ENCODE measurements at regions of chr6 and their contacts with region 1.

Region 1: DNA sequence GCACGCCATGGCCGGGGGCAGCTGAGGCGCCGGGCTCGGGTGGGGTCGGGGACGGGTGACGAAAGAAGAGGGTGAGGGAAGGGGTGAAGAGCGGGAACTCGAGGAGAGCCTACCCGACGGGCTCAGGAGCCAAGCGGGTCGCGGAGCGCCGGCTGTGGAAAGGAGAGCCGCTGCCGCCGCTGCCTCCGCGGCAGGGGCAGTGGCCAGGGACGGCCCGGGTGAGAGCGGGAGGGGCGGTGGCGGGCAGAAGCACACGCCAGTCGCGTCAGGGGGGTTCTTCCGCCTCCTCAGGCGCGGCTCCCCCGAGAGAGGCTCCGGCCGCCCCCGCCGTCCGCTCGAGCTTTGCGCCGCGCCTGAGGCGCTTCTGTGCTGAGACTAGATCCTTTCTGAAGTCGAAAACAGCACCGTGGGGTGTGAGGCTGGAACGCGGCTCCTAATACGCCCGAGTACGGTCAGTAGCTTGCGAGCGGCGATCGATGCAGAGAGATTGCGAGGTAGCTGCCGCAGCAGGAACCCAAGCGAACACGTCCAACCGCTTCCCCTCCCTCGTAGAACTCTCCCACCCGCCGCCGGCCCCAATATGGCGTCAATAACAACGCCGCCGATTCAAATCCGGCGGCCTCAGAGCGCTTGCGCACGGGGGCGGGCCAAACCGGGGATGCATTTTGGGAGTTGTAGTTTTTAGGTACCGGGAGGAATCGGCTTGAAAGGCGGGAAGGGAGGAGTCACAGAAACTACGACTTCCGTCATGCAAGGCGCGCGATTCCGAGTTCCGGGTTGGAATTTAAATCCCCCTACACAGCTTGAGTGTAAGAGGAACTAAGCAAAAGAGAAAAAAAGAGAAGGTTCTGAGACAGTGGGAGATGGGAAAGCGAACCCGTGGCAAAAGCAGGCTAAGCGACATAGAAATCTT is at the start of gene AKIRIN2:
- DNase-seq: peak; percentile 95 to 96
- H3K4me3 ChIP-seq: peak within 1 kb of the TSS; percentile 95 to 99 (median 95)
- H3K27ac ChIP-seq: peak within 1 kb of the TSS; percentile 92
- H3K4me1 ChIP-seq: peaks cover 0 to 8% (median 0%) of the 10 kb centered on the region in 4 experiments; a peak in 2 of 7 replicates
- H3K27me3 ChIP-seq: no peaks in the 10 kb centered on the region
- CTCF ChIP-seq: no peak
- EP300 ChIP-seq: no peak
- POLR2A ChIP-seq: peak; percentile 96 to 97
- RAD21 ChIP-seq: no peak
- total RNA-seq, gene AKIRIN2: 75.3 and 77.2 TPM in 2 replicates

Region 2: DNA sequence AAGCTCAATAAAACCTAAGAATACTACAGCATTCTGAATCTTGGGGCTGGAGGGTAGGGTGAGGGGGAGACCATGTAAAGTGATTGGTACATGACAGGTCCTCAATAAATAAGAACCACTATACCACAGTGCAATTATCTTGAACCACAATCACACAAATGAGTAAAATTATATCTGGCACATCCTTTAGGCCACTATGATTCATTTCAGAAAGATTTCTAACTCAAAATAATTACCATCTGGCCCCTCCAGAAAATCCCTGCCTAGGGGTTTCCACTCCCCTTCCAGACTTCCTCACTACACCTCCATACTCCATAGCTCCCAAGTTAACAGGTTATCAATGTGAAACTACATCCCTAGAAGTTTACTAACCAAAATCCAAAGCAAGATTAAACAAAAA is 19.6 kb before region 1 on chr6:
- CTCF ChIA-PET with region 1: interaction called, 3 read pairs
- POLR2A ChIA-PET with region 1: interaction called, 11 read pairs
- DNase-seq: no peak
- H3K4me3 ChIP-seq: no peak overlapping the region
- H3K27ac ChIP-seq: no peak overlapping the region
- H3K4me1 ChIP-seq: no peaks in the 10 kb centered on the region; a peak in 1 of 7 replicates
- H3K27me3 ChIP-seq: no peaks in the 10 kb centered on the region
- CTCF ChIP-seq: no peak
- EP300 ChIP-seq: no peak
- POLR2A ChIP-seq: no peak
- RAD21 ChIP-seq: no peak

Region 3: DNA sequence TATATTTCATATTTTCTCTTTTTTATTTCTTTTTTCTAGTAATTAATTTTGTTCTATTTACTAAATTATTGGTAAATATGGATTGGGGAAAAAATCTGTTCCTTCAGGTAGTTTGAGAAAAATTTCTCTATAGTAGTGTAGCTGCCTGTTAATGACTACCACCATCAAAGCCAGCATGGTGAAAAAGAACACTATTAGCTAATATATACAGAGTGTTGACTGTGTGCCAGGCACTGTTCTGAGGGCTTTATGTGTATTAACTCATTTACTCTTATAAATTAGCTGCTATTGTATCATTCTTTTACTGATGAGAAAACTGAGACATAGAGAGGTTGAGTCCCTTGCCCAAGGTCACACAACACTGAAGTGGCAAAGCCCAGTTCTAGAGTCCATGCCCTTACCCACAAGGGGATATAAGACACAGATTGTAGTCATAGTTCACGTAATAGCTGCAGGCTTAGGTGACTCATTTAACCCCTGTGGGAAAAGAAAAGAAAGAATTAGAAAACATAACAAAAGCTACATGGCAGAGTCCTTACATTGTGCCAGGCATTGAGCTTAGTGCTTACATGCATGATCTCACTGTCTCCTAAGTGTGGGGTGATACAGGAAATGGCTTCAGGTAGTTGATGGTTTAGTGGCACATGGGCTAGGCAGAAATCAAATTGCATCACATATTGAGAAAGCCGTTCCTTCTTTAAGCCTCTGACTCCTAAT is 12.3 kb after region 1 on chr6:
- CTCF ChIA-PET with region 1: interaction called, 4 read pairs
- POLR2A ChIA-PET with region 1: interaction called, 36 read pairs
- DNase-seq: peak in 1 of 2 experiments; percentile 30
- H3K4me3 ChIP-seq: no peak overlapping the region
- H3K27ac ChIP-seq: no peak overlapping the region
- H3K4me1 ChIP-seq: peaks cover 0 to 5% (median 2%) of the 10 kb centered on the region in 4 experiments; a peak in 3 of 7 replicates
- H3K27me3 ChIP-seq: no peaks in the 10 kb centered on the region
- CTCF ChIP-seq: no peak
- EP300 ChIP-seq: no peak
- POLR2A ChIP-seq: no peak
- RAD21 ChIP-seq: no peak

Region 4: DNA sequence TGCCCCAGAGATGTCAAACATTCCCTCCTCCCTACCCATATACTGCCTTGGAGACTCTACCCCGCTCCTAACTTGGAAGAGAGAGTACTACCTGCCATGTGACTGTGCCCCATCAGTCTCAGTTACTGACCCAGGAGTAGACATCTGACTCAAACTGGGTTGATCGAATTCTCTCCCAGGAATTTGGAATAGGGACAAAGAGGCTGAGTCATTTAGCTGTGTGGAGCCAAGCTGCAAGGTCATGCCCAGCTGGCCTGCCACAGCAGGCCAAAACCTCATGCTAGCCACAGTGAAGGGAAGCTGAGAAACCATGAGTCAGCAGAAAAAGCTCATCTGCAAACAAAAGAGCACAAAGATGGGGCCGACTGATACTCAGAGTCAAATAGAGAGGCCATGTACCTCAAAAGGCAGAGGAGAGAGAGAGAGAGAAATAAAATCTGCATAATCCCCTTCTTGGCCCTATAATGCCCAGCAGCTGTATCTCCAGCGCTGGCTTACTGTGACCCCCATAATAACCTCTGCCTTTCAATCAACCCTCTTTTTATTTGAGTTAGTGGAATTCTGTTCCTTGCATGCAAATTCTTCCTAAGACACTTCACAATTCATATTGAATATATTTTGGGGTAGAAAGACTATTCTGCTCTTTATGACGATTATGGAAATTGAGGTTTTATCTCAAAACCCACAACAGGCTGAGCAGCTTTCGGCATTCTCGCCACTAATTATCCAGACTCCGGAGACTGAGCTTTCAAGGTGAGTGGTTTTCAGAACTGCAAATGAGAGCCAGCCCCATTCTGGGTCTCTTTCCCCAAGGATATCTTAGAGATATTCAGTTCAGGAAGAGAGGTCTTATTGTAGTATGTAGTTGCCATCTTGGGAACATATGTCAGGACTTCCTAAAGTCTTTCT is 21.5 kb after region 1 on chr6:
- CTCF ChIA-PET with region 1: no interaction called
- POLR2A ChIA-PET with region 1: interaction called, 12 read pairs
- DNase-seq: peak in 1 of 2 experiments; percentile 66
- H3K4me3 ChIP-seq: no peak overlapping the region
- H3K27ac ChIP-seq: no peak overlapping the region
- H3K4me1 ChIP-seq: peaks cover 0 to 5% (median 0%) of the 10 kb centered on the region in 4 experiments; a peak in 3 of 7 replicates
- H3K27me3 ChIP-seq: no peaks in the 10 kb centered on the region
- CTCF ChIP-seq: no peak
- EP300 ChIP-seq: peak in 1 of 2 experiments; percentile 69; a peak in 1 of 3 replicates
- POLR2A ChIP-seq: no peak
- RAD21 ChIP-seq: no peak